Aorta (tissue), 5 donors: ENCODE measurements at regions of chr22 and their contacts with region 1.

Region 1: DNA sequence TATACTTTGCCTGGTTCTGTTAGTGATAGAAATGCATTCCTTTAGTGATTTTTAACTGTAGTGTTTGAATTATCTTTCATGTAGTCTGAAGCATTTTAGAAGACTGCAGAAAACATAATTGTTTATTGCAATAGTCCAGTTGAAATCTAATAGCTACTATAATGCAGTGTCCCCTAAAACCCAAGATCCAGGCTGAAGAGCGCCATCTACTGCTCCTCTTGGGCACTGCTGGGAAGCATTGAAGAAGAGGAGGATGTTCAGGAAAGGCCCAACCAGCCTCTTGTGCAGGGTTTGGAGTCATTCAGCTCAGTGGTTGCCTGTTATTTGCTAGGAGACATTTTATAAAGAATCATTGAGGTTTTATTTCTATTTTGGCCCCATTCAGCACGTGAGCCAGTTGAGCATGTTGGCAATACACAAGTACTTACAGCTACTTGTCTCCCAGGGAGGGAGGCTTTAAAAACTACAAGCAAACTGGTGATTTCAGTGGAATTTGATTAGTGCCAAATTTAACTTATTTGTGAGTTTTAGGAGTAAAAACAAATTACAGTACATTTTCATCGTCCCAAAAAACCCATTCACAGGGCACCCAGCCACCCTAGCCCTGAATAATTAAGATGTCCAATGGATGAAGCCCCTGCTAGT is 74.9 kb upstream of the HORMAD2 start:
- DNase-seq: peak; percentile 66 to 85
- ATAC-seq: peak; percentile 87
- H3K4me3 ChIP-seq: no peak overlapping the region
- H3K27ac ChIP-seq: no peak overlapping the region
- H3K4me1 ChIP-seq: no peaks in the 10 kb centered on the region
- H3K27me3 ChIP-seq: no peaks in the 10 kb centered on the region

Region 2: GRCh38 chr22:29635734-29636357 is 369.5 kb before region 1 on chr22:
- intact Hi-C with region 1: loop called (anchors 10 kb)
- DNase-seq: no peak
- ATAC-seq: no peak
- H3K4me3 ChIP-seq: no peak overlapping the region
- H3K27ac ChIP-seq: no peak overlapping the region
- H3K4me1 ChIP-seq: no peaks in the 10 kb centered on the region
- H3K27me3 ChIP-seq: no peaks in the 10 kb centered on the region

Region 3: DNA sequence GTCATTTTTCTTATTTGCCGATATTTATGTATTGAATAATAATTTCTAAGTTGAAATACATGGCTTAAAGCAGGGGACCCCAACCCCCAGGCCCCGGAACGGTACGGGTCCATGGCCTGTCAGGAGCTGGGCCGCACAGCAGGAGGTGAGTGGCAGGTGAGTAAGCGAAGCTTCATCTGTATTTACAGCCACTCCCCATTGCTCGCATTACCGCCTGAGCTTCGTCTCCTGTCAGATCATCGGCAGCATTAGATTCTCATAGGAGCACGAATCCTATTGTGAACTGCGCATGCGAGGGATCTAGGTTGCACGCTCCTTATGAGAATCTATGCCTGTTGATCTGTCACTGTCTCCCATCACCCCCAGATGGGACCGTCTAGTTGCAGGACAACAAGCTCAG is 243.1 kb before region 1 on chr22:
- intact Hi-C with region 1: no loop called
- DNase-seq: no peak
- ATAC-seq: no peak
- H3K4me3 ChIP-seq: no peak overlapping the region
- H3K27ac ChIP-seq: no peak overlapping the region
- H3K4me1 ChIP-seq: peaks cover 0 to 2% of the 10 kb centered on the region in 2 donors
- H3K27me3 ChIP-seq: no peaks in the 10 kb centered on the region

Region 4: DNA sequence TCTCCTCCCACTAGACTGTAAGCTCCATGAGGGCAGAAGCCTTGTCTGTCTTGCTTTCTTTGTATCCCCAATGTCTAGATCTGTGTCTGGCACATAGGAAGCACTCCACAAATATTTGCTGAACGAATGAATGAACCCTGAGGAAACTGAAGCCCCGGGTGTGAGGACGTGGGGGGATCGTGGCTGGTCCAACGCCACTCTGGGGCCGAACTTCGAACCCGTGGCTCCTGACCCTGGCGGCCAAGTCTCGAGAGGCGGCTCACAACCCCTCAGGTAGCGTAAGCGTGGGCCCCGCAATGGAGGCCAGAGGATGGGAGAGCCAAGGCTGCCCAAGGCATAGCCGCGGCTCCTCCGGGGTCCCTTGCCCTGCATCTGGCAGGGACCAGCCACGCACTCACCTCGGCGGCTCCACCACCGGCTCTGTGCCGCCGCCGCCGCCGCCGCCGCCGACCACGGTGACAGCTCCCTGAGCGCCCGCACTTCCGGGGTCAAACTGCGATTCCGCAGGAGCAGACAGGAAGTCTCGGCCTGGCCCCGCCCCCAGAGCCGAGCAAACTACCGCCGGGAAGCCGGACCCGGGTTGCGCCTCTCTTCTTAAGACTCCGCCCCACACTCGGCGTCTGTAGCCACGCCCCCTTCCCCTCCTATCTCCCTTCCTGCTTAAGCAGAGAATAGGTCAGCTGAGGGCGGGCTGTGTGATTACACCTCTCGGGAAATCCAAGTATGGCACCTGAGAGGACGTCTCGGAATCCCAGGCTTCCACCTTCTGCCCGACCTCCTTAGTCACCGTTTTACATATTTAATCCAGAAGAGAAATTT is 167.3 kb before region 1 on chr22 and contains the start of gene ASCC2:
- intact Hi-C with region 1: loop called (anchors 5 kb)
- DNase-seq: peak; percentile 100
- ATAC-seq: peak; percentile 99
- H3K4me3 ChIP-seq: peak within 1 kb of the TSS; percentile 58 to 92
- H3K27ac ChIP-seq: peak within 1 kb of the TSS in 1 of 2 donors; percentile 11
- H3K4me1 ChIP-seq: no peaks in the 10 kb centered on the region
- H3K27me3 ChIP-seq: no peaks in the 10 kb centered on the region
- total RNA-seq, gene ASCC2: 36.9 to 58.0 TPM

Region 5: DNA sequence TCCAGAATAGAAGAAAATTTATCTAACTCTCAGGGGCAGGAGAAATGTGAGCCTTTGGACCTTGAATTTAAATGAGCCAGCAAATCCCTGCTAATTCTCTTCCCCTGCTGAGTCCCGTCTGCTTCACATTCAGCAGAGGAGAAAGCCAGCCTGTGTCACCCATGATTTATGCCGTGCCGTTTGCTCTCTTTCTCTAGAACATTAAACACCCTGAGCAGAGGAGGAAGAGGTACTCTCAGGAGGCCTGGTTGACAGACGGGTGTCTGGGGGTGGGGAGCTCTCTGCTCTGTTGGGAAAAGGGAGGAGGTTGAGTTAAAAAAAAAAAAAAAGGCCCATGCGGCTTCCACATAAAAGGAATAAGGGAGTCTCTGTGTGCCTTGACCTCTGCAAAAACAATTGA is 133.7 kb before region 1 on chr22:
- intact Hi-C with region 1: loop called in 1 of 2 experiments (anchors 10 kb)
- DNase-seq: no peak
- ATAC-seq: no peak
- H3K4me3 ChIP-seq: no peak overlapping the region
- H3K27ac ChIP-seq: no peak overlapping the region
- H3K4me1 ChIP-seq: no peaks in the 10 kb centered on the region
- H3K27me3 ChIP-seq: no peaks in the 10 kb centered on the region